ENCODE measurements at regions of chr3 and their contacts with region 1.

Region 1: GRCh38 chr3:126197854-126198584 is 17.6 kb upstream of the ALDH1L1 start:
- DNase-seq: no peak
- H3K4me3 ChIP-seq: no peak overlapping the region
- CTCF ChIP-seq: peak; percentile 89

Region 2: GRCh38 chr3:126180477-126181397 is 17.3 kb before region 1 on chr3 and contains the start of gene ALDH1L1:
- CTCF ChIA-PET with region 1: interaction called, 48 read pairs
- POLR2A ChIA-PET with region 1: no interaction called
- DNase-seq: no peak
- H3K4me3 ChIP-seq: peak within 1 kb of the TSS; percentile 50
- CTCF ChIP-seq: no peak

Region 3: GRCh38 chr3:126186271-126186670 is 11.7 kb before region 1 on chr3:
- CTCF ChIA-PET with region 1: interaction called, 48 read pairs
- POLR2A ChIA-PET with region 1: no interaction called
- DNase-seq: no peak
- H3K4me3 ChIP-seq: no peak overlapping the region
- CTCF ChIP-seq: no peak

Region 4: DNA sequence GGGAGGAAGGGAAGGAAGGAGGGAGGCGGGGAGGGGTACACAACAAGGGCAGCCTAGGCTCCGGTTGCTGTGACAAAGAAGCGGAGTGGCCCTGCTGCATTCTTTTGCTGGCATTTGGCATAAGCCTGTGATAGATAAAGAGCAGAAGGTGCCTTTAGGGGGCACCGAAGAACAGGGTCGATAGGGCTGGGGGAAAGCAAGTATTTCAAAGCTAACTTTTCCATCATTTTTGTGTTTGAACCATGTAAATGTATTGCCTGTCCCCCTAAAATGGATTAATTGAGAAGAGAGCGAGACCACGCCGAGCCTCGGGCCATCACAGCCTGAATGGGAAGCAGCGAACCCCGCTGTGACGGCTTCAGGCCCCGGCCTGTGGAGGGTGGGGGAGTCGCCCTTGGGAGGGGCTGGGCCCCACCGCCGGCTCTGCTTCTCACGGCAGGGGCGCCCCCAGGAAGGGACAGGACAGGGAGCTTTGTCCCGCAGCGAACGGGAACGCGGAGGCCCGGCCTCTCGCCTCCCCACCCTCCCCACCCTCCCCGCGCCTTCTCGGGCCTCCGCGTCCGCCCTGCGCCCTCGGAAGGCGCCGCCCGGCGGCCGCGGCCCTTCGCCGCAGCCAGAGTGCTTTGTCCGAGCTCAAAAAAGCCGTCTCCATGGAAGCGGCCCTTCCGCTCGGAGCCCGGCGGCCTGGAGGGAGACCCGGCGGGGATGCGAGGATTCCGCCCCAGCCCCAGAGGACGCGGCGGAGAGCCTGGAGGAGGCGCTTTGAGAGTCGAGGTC is 14.8 kb after region 1 on chr3:
- CTCF ChIA-PET with region 1: interaction called, 76 read pairs
- POLR2A ChIA-PET with region 1: no interaction called
- DNase-seq: no peak
- H3K4me3 ChIP-seq: peak overlapping the region; percentile 29
- CTCF ChIP-seq: peak; percentile 39

Region 5: DNA sequence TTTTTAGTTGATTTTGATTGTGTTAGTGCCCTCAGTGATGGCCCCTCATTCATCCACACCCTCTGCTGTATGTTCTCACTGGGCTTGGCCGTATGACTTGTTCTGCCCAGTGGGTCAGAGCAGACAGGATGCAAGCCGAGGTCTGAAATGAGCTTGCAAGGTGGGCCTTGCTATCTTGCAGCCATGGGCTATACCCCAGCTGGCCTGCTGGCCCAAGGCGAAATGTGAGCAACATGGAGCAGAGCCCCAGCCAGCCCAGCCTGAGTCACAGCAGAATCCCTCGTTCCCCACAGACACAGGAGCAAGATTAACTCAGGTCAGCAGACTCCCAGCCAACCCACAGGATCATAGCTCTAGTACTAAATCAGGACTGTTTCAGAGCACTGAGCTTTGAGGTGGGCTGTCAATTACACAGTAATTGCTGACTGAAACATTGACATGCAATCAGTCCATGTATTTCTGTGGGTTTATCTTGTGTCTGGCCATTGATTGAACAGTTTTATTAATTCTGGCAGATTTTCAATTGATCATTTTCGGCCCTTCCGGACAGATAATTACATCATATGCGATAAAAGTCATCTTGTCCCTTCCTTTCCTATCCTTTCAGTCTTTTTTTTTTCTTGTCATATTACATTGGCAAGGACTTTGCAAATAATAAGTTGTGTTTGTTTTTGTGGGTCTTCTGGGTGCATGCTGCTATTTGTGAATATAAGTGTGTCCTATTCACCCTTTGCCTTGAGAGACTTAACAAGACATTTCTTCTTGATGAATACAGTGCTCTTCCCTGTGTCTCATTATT is 132.1 kb after region 1 on chr3:
- CTCF ChIA-PET with region 1: no interaction called
- POLR2A ChIA-PET with region 1: no interaction called
- DNase-seq: no peak
- H3K4me3 ChIP-seq: no peak overlapping the region
- CTCF ChIP-seq: no peak

Region 6: DNA sequence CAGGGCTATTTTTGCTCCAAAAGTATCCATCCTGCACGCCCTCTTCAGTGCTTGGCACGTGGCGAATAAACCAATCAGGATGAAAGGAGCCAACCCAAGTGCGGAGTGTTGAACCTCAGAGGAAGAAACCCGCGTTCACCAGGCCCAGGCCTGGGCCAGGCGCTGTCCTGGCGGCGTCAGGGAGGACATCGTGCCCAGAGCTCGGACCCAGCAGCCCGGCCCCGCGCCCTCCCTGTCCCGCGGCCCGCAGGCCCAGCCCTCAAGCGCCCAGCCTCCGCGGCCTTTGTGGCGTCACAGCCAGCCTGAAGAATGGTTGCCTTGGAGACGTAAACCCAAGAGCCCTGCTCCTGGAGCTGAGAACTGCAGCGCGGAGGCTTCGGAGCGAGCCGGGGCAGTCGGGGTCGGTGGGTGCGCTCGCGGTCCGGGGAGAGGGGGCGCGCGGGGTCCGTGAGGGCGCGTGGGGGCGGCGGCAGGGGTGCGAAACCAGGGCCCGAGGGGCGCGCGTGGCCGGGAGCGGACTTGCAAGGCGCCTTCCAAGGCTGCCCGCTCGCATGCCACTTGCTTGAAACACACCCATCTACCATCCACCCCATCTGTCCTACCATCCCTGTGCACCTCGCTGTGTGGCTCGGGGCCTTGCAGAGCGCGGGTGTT is 196.7 kb after region 1 on chr3 and contains the start of gene CFAP100:
- CTCF ChIA-PET with region 1: interaction called, 52 read pairs
- POLR2A ChIA-PET with region 1: no interaction called
- DNase-seq: no peak
- H3K4me3 ChIP-seq: 0 out of 2 replicates have a peak within 1 kb of the TSS, but pooled peaks have one; percentile 1
- CTCF ChIP-seq: no peak

Measured in AG04449 (cell line).